ENCODE measurements at regions of chr1 and their contacts with region 1.

Region 1: GRCh38 chr1:231828182-231828920 is 201.8 kb downstream of the DISC1 start:
- DNase-seq: peak; percentile 100
- H3K4me3 Mint-ChIP-seq: peak overlapping the region; percentile 12
- H3K27ac Mint-ChIP-seq: peak overlapping the region; percentile 97
- H3K4me1 Mint-ChIP-seq: peaks cover 58% of the 10 kb centered on the region
- H3K27me3 Mint-ChIP-seq: no peaks in the 10 kb centered on the region
- CTCF ChIP-seq: no peak

Region 2: GRCh38 chr1:231800108-231800507 is 28.2 kb before region 1 on chr1:
- CTCF ChIA-PET with region 1: interaction called, 3 read pairs
- POLR2A ChIA-PET with region 1: interaction called, 12 read pairs
- intact Hi-C with region 1: loop called (anchors 2 kb)
- DNase-seq: peak; percentile 85
- H3K4me3 Mint-ChIP-seq: peak overlapping the region; percentile 56
- H3K27ac Mint-ChIP-seq: peak overlapping the region; percentile 92
- H3K4me1 Mint-ChIP-seq: peaks cover 31% of the 10 kb centered on the region
- H3K27me3 Mint-ChIP-seq: no peaks in the 10 kb centered on the region
- CTCF ChIP-seq: no peak

Region 3: DNA sequence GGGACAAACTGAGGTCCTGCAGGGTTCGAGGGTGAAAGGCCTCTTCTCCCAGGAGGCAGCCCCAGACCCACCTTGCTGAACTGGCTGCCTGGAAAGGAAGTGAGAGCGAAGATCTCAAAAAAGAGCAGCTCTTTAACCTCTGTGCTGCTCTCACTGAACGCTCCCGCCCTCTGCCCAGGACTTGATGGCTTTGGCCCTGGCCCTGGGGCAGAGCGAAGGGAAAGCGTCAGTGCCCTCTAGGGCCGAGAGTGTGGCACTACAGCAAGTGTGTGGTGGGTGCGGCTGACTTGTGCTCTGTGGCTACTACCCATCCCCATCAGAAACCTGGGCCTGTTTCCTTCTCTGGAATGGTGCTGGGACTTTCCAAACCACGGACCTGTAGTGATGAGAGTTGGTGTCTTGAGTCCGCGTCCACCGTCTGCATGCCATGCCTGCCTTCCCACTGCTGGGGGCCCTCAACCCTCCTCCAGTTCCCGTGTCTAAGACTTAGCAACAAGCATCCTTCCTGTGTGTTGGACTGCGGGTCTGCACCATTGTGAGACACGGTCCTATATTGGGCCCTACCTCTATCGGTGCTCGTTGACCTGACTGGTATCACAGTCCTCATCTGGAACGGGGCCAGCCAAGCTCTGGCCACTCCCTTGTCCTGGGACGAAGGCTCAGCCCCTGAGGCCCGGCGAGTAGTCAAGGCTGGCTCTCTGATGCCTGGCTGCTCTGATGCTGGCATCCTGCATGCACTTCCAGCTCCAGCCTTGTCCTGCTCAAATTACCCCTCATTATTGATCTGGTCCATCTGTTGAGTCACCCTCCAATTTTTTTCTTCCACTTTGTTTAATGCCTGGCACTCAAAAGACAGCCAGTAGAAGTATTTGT is 21.5 kb before region 1 on chr1:
- CTCF ChIA-PET with region 1: interaction called, 4 read pairs
- POLR2A ChIA-PET with region 1: interaction called, 5 read pairs
- intact Hi-C with region 1: loop called (anchors 1 kb)
- DNase-seq: peak; percentile 92
- H3K4me3 Mint-ChIP-seq: no peak overlapping the region
- H3K27ac Mint-ChIP-seq: peak overlapping the region; percentile 65
- H3K4me1 Mint-ChIP-seq: peaks cover 31% of the 10 kb centered on the region
- H3K27me3 Mint-ChIP-seq: no peaks in the 10 kb centered on the region
- CTCF ChIP-seq: peak; percentile 64

Region 4: GRCh38 chr1:231844986-231845502 is 16.7 kb after region 1 on chr1:
- CTCF ChIA-PET with region 1: no interaction called
- POLR2A ChIA-PET with region 1: no interaction called
- intact Hi-C with region 1: no loop called
- DNase-seq: no peak
- H3K4me3 Mint-ChIP-seq: no peak overlapping the region
- H3K27ac Mint-ChIP-seq: peak overlapping the region; percentile 13
- H3K4me1 Mint-ChIP-seq: peaks cover 17% of the 10 kb centered on the region
- H3K27me3 Mint-ChIP-seq: no peaks in the 10 kb centered on the region
- CTCF ChIP-seq: no peak